ENCODE measurements at regions of chr9 and their contacts with region 1.

Region 1: DNA sequence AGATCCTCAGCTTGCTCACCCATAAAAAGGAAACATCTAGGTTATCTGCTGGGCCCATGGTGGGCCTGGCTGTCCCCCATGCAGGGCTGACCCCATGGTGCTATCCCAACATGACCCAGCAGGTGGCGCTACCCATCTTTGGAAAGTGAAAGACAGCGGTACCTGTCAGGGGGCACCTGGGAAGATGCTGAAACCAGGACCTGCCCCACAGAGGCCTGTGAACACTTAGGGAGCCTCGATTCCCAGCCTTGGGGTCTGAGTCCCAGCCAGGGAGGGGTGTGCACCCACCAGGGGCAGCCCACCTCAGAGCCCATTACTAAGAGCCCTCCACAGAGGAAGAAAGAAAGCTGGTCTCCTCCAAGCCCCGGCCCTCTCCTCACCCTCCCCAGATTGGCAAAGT is 46.6 kb upstream of the IPPK start:
- DNase-seq: peak; percentile 17 to 100
- H3K4me3 ChIP-seq: no peak overlapping the region
- H3K27ac ChIP-seq: no peak overlapping the region
- H3K4me1 ChIP-seq: no peaks in the 10 kb centered on the region
- H3K27me3 ChIP-seq: no peaks in the 10 kb centered on the region
- CTCF ChIP-seq: peak in 2 of 3 experiments; percentile 91; a peak in 3 of 4 replicates
- EP300 ChIP-seq: no peak
- POLR2A ChIP-seq: no peak
- RAD21 ChIP-seq: peak; percentile 89 to 91

Region 2: GRCh38 chr9:92607088-92607487 is 109.5 kb before region 1 on chr9:
- CTCF ChIA-PET with region 1: no interaction called
- POLR2A ChIA-PET with region 1: no interaction called
- DNase-seq: no peak
- H3K4me3 ChIP-seq: no peak overlapping the region
- H3K27ac ChIP-seq: no peak overlapping the region
- H3K4me1 ChIP-seq: no peaks in the 10 kb centered on the region
- H3K27me3 ChIP-seq: 0 out of 7 replicates have a peak, but pooled peaks cover 0 to 2% (median 0%) of the 10 kb centered on the region in 4 experiments
- CTCF ChIP-seq: no peak
- EP300 ChIP-seq: no peak
- POLR2A ChIP-seq: no peak
- RAD21 ChIP-seq: no peak

Region 3: GRCh38 chr9:92706216-92706940 is 10.2 kb before region 1 on chr9:
- CTCF ChIA-PET with region 1: interaction called, 31 read pairs
- POLR2A ChIA-PET with region 1: no interaction called
- DNase-seq: peak in 1 of 2 experiments; percentile 69
- H3K4me3 ChIP-seq: no peak overlapping the region
- H3K27ac ChIP-seq: no peak overlapping the region
- H3K4me1 ChIP-seq: no peaks in the 10 kb centered on the region
- H3K27me3 ChIP-seq: no peaks in the 10 kb centered on the region
- CTCF ChIP-seq: peak; percentile 66 to 92 (median 90)
- EP300 ChIP-seq: no peak
- POLR2A ChIP-seq: no peak
- RAD21 ChIP-seq: peak; percentile 76 to 77

Region 4: GRCh38 chr9:92764988-92765936 is 48.7 kb after region 1 on chr9:
- CTCF ChIA-PET with region 1: interaction called, 16 read pairs
- POLR2A ChIA-PET with region 1: no interaction called
- DNase-seq: peak; percentile 95
- H3K4me3 ChIP-seq: peak overlapping the region; percentile 77 to 98 (median 80)
- H3K27ac ChIP-seq: peak overlapping the region; percentile 97
- H3K4me1 ChIP-seq: peaks cover 0 to 25% (median 8%) of the 10 kb centered on the region in 4 experiments; a peak in 5 of 7 replicates
- H3K27me3 ChIP-seq: no peaks in the 10 kb centered on the region
- CTCF ChIP-seq: peak; percentile 81 to 88 (median 81)
- EP300 ChIP-seq: no peak
- POLR2A ChIP-seq: peak in 1 of 2 experiments; percentile 79; a peak in 2 of 3 replicates
- RAD21 ChIP-seq: peak; percentile 56 to 63; a peak in 3 of 4 replicates

Region 5: GRCh38 chr9:92780206-92780605 is 63.6 kb after region 1 on chr9:
- CTCF ChIA-PET with region 1: interaction called, 17 read pairs
- POLR2A ChIA-PET with region 1: no interaction called
- DNase-seq: no peak
- H3K4me3 ChIP-seq: no peak overlapping the region
- H3K27ac ChIP-seq: no peak overlapping the region
- H3K4me1 ChIP-seq: no peaks in the 10 kb centered on the region
- H3K27me3 ChIP-seq: no peaks in the 10 kb centered on the region
- CTCF ChIP-seq: no peak
- EP300 ChIP-seq: no peak
- POLR2A ChIP-seq: no peak
- RAD21 ChIP-seq: no peak

Region 6: DNA sequence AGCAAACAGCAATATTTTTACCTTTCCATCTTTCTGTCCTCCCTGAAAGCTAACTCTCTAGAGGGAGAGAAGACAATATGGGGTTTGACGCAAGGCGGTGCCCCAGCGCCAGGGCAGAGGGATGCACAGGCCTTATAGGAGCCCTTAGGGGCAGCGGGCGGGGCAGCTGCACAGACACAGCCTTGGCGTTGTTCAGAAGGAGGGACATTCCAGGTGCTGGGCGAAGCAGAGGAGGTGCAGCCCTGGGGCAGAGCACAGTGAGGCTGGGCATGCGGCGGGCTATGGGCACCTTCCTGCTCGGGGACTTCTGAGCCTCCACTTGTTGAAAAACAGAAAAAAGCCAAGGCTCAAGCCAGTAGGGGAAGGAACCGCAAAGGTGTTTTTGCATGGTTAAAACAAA is 81.8 kb after region 1 on chr9:
- CTCF ChIA-PET with region 1: interaction called, 236 read pairs
- POLR2A ChIA-PET with region 1: no interaction called
- DNase-seq: no peak
- H3K4me3 ChIP-seq: no peak overlapping the region
- H3K27ac ChIP-seq: no peak overlapping the region
- H3K4me1 ChIP-seq: 0 out of 7 replicates have a peak, but pooled peaks cover 0 to 2% (median 0%) of the 10 kb centered on the region in 4 experiments
- H3K27me3 ChIP-seq: no peaks in the 10 kb centered on the region; a peak in 1 of 7 replicates
- CTCF ChIP-seq: no peak
- EP300 ChIP-seq: no peak
- POLR2A ChIP-seq: no peak
- RAD21 ChIP-seq: no peak

Measured in H1 (cell line).